ENCODE measurements at regions of chr9 and their contacts with region 1.

Region 1: DNA sequence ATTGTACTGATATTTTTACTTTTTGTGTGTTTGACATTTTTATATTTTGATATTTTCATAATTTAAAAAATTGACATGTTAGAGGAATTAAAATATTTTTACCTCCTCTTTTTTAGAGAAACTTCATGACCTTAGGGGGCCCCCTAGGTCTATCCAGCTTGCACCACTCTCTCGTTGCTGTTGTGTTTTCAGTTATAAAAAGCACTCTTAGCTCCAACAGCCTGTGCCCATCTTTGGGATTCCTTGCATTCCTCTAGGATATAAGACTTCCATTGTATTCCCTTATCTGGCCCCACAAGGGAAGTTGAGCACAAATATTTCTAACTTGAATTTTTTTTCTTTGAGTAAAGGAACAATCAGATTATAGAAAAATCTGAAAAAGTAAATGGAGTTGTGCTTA is 245.3 kb downstream of the SH3GL2 start:
- DNase-seq: no peak
- ATAC-seq: peak; percentile 68

Region 2: GRCh38 chr9:17783227-17783626 is 41.0 kb before region 1 on chr9:
- intact Hi-C with region 1: no loop called
- DNase-seq: no peak
- ATAC-seq: no peak

Region 3: DNA sequence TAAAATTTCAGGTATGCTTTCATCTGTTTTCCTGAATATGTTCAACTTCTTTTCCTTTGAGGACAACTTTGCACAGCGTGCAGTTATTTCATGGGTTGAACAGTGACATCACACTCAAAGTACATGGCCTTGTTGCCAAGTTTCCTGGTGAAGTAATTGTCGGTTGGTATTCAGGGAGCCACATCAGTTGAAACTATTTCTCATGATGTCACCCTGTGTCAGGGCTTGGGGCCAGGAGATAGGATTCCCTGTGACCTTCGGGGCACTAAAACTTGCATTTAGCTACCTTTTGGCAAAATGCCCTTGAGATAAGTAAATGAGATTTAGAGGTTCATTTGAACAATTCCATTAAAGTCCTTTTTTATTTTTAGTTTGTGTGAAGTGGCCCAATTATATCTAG is 138.6 kb after region 1 on chr9:
- intact Hi-C with region 1: no loop called
- DNase-seq: no peak
- ATAC-seq: peak; percentile 56

Region 4: DNA sequence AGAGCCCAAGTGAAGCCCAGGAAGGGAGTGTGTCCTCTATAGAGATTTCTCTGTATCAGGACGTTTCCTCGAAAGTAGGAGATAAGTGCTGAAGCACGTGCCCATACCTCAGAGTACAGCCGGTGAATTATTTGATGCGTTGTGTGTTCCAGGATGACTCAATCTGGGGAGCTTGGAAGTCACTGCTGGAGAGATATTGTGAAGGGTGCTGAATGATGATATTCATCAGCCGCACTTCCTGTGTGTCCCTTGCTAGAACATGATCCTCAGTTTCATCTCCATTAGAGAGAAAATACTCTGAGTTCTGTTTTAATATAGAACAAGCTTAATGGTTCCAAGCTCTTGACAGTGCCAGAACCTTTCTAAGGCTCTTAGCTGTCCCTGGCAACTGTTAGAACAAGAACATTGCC is 247.5 kb after region 1 on chr9:
- intact Hi-C with region 1: loop called (anchors 10 kb)
- DNase-seq: no peak
- ATAC-seq: peak; percentile 88